Activated T-helper 1 cell treated with anti-CD3 and anti-CD28 coated beads, Interleukin-12 subunit alpha, Interleukin-12 subunit beta, Interleukin-2, Interleukin-4 antibody, amounts not matched to agents 30 ng/mL and 10 ng/mL and 1 ng/mL, durations not matched to agents 14 hours and 24 hours and 36 hours (primary cell): ENCODE measurements at regions of chr10 and their contacts with region 1.

Region 1: DNA sequence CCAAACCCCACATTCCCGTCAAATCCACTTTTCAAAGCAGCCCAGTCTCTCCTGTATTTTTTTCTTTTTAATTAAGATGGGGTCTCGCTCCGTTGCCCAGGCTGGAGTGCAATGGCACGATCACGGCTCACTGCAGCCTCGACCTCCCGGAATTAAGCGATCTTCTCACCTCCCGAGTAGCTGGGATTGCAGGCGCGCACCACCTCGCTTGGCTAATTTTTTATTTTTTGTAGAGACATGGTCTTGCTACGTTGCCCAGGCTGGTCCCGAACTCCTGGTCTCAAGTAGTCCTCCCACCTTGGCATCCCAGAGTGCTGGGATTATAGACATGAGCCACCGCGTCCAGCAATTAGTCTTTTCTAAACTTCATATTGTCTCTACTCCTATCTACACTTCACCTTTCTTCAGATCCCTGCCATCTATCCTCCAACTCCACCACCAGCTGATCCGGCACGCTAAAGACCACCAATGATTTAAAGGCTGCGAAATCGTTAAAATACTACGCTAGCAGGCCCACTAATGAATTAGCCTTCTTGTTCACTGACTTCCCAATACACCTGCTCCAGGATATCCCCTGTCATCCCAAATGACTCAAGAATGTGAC is 525 bp upstream of the CHUK start:
- DNase-seq: no peak
- H3K4me3 Mint-ChIP-seq: peak overlapping the region; percentile 97
- H3K27ac Mint-ChIP-seq: peak overlapping the region; percentile 82
- H3K4me1 Mint-ChIP-seq: peaks cover 34% of the 10 kb centered on the region
- H3K27me3 Mint-ChIP-seq: no peaks in the 10 kb centered on the region

Region 2: GRCh38 chr10:100535715-100536353 is 305.9 kb after region 1 on chr10 and contains the start of gene HIF1AN:
- intact Hi-C with region 1: loop called (anchors 2 kb)
- DNase-seq: peak; percentile 90
- H3K4me3 Mint-ChIP-seq: no peak within 1 kb of the TSS
- H3K27ac Mint-ChIP-seq: no peak within 1 kb of the TSS
- H3K4me1 Mint-ChIP-seq: peaks cover 16% of the 10 kb centered on the region
- H3K27me3 Mint-ChIP-seq: no peaks in the 10 kb centered on the region
- total RNA-seq, gene HIF1AN: 46.5 and 54.1 TPM in 2 replicates